Activated CD4-positive, alpha-beta T cell treated with anti-CD3 and anti-CD28 coated beads for 36 hours (primary cell): ENCODE measurements at regions of chr11 and their contacts with region 1.

Region 1: DNA sequence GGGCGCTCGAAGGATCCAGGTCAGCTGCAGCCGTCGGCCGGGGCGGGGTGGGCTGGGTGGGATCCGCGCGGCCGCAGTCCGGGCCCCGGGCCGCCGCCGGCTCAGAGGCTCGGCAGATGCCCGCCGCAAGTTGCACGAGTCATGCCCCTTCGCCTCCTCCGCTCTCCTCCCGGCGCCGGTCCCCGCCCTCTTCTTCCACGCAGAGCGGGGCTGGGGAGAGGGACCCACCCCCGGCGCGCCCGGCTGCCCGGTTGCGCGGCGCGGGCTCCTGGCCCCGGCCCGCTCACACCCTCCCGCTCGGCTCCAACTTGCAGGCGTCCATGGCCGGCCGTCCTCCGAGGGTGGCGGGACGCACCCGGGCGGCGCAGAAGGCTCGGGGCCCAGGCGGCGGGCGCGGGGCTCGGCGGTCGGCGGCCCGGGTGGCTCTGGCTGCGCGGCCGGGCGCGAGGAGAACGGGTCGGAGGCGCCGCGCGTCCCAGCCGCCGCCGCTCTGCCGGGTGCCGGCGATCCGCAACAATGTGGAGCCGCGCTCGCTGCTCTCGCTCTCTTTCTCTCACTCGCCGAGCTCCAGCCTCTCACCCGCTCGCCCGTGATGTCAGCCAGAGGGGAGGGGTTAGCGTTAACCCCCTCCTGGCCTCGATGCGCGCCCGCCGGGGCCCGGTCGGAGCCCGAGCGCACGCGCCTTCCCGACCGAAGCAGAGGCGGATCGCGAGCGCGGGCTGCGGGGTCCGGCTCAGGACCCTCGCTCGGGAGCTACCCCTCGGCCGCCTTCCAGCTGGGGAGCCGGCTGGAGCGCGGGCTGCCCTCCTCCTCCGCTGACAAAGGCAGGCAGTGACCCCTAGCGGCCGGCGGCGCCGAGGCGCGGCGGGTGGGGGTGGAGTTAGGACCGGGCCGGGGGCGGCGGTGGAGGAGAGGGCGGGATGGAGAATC is at the start of gene NECTIN1:
- DNase-seq: peak; percentile 92
- ATAC-seq: peak; percentile 91
- H3K4me3 Mint-ChIP-seq: peak within 1 kb of the TSS; percentile 74
- H3K27ac Mint-ChIP-seq: no peak within 1 kb of the TSS
- H3K4me1 Mint-ChIP-seq: peaks cover 12% of the 10 kb centered on the region
- H3K27me3 Mint-ChIP-seq: peaks cover 24% of the 10 kb centered on the region
- total RNA-seq, gene NECTIN1: 1.6 to 1.7 TPM

Region 2: GRCh38 chr11:119381181-119381988 is 347.5 kb before region 1 on chr11 and contains the start of gene USP2:
- CTCF ChIA-PET with region 1: no interaction called
- POLR2A ChIA-PET with region 1: no interaction called
- intact Hi-C with region 1: loop called in 1 of 2 experiments (anchors 5 kb)
- DNase-seq: peak; percentile 98
- ATAC-seq: peak; percentile 98
- H3K4me3 Mint-ChIP-seq: no peak within 1 kb of the TSS
- H3K27ac Mint-ChIP-seq: peak within 1 kb of the TSS; percentile 18
- H3K4me1 Mint-ChIP-seq: peaks cover 7% of the 10 kb centered on the region
- H3K27me3 Mint-ChIP-seq: no peaks in the 10 kb centered on the region
- total RNA-seq, gene USP2: 0.58 to 0.71 TPM

Region 3: GRCh38 chr11:119641983-119642745 is 86.8 kb before region 1 on chr11:
- CTCF ChIA-PET with region 1: interaction called, 3 read pairs
- POLR2A ChIA-PET with region 1: interaction called, 3 read pairs
- intact Hi-C with region 1: loop called in 1 of 2 experiments (anchors 1 kb)
- DNase-seq: peak; percentile 28
- ATAC-seq: no peak
- H3K4me3 Mint-ChIP-seq: no peak overlapping the region
- H3K27ac Mint-ChIP-seq: no peak overlapping the region
- H3K4me1 Mint-ChIP-seq: no peaks in the 10 kb centered on the region
- H3K27me3 Mint-ChIP-seq: peaks cover 6% of the 10 kb centered on the region

Region 4: DNA sequence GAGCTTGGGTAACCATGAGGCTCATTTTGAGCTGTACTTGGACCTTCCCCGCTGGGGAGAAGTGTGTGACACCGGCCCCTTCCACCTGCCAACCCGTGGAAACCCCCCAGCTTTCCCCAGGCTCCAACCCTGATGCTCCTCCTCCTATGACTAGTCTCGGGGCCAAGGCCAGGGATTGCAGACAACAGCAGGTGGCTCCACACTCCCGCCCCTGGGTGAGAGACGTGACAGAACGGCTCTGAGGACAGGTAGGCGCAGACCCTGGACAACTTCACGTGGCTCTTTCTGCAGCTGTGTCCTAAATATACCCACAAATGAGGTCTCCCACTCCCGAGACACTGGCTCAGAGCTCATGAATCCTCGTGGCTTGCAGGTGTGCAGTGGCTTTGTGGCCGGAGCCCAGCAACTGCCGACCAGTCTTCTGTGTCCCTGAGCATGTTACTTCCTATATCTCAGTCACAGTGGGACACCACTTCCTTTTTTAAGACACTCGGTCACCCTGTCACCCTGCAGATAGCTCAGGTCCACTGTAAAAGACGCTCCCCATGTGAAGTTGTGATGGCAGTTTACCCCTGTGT is 55.1 kb before region 1 on chr11:
- CTCF ChIA-PET with region 1: interaction called, 15 read pairs
- POLR2A ChIA-PET with region 1: no interaction called
- intact Hi-C with region 1: loop called in 1 of 2 experiments (anchors 1 kb)
- DNase-seq: peak; percentile 79
- ATAC-seq: peak; percentile 97
- H3K4me3 Mint-ChIP-seq: no peak overlapping the region
- H3K27ac Mint-ChIP-seq: no peak overlapping the region
- H3K4me1 Mint-ChIP-seq: peaks cover 11% of the 10 kb centered on the region
- H3K27me3 Mint-ChIP-seq: no peaks in the 10 kb centered on the region

Region 5: GRCh38 chr11:120108154-120108865 is 379.4 kb after region 1 on chr11:
- CTCF ChIA-PET with region 1: interaction called, 4 read pairs
- POLR2A ChIA-PET with region 1: no interaction called
- intact Hi-C with region 1: loop called in 1 of 2 experiments (anchors 5 kb)
- DNase-seq: peak; percentile 80
- ATAC-seq: peak; percentile 86
- H3K4me3 Mint-ChIP-seq: no peak overlapping the region
- H3K27ac Mint-ChIP-seq: no peak overlapping the region
- H3K4me1 Mint-ChIP-seq: no peaks in the 10 kb centered on the region
- H3K27me3 Mint-ChIP-seq: peaks cover 4% of the 10 kb centered on the region